ENCODE measurements at regions of chr20 and their contacts with region 1.

Region 1: GRCh38 chr20:39049684-39050554 is 87.8 kb downstream of the DHX35 start:
- DNase-seq: peak; percentile 88
- ATAC-seq: peak; percentile 92

Region 2: GRCh38 chr20:38764567-38765355 is 285.2 kb before region 1 on chr20:
- intact Hi-C with region 1: no loop called
- DNase-seq: no peak
- ATAC-seq: no peak

Region 3: DNA sequence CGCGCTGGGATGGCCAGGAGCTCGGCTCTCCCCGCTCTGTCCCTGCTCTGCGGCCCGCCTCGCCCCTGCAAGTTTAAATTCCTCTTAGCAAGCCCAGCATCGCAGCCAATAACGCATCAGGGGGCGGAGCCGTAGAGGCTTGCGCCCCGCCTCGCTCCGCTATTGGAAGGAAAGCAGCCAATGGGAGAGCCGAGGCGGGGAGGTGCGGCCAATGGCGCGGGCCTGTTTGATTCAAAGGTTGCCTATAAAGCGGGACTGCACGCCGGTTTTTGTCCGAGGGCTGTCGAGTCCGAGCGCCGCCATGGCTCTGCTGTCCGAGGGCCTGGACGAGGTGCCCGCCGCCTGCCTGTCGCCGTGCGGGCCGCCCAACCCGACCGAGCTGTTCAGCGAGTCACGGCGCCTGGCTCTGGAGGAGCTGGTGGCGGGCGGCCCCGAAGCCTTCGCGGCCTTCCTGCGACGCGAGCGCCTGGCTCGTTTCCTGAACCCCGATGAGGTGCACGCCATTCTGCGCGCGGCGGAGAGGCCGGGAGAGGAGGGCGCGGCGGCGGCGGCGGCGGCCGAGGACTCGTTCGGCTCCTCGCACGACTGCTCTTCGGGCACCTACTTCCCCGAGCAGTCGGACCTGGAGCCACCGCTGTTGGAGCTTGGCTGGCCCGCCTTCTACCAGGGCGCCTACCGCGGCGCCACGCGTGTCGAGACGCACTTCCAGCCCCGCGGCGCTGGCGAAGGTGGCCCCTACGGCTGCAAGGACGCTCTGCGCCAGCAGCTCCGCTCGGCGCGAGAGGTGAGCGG is 123.6 kb before region 1 on chr20 and contains the start of gene FAM83D:
- intact Hi-C with region 1: loop called (anchors 5 kb)
- DNase-seq: peak; percentile 96
- ATAC-seq: peak; percentile 98
- total RNA-seq, gene FAM83D: 0.35 TPM

Region 4: DNA sequence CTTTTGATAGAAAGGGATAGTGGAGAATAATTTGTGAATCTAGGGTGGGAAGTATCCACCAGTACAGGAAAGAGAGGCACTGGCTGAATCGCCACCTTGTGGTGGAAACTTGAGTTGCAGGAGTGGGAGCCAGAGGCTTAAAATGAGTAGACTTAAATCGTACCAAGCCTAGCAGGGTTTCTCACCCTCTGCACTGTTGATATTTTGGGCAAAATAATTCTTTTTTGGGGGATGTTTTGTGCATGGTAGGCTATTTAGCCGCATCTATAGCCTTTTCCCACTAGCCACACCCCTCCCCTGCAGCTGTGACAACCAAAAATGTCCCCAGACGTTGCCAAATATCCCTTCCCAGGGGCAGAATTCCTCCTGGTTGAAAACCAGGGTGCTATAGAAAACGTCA is 31.3 kb after region 1 on chr20:
- intact Hi-C with region 1: loop called (anchors 2 kb)
- DNase-seq: peak; percentile 80
- ATAC-seq: peak; percentile 81

Region 5: GRCh38 chr20:39105549-39105948 is 55.6 kb after region 1 on chr20:
- intact Hi-C with region 1: no loop called
- DNase-seq: no peak
- ATAC-seq: no peak

Region 6: DNA sequence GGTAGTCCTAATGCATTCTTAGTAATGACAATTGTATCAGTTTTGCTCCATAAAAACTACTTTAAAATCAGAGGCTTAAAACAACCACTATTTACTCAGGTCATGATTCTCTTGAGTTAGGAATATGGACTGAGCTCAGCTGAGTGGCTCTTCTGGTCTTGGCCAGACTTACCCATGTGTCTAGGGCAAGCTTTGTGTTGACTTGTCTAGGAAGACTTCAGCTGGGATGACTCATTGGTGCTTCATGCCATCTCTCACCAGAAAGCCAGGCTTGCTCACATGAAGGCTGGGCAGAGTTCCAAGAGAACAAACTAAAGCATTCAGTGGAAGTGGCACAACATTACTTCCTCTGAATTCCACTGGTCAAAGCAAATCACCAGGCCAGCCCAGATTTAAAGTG is 67.6 kb after region 1 on chr20:
- intact Hi-C with region 1: no loop called
- DNase-seq: no peak
- ATAC-seq: no peak